ENCODE measurements at regions of chrX and their contacts with region 1.

Region 1: GRCh38 chrX:131802835-131803626 is 220.1 kb upstream of the STK26 start:
- DNase-seq: peak; percentile 20
- ATAC-seq: no peak
- H3K4me3 ChIP-seq: peak overlapping the region in 3 of 5 experiments; percentile 59 to 66 (median 65)
- H3K4me3 Mint-ChIP-seq: no peak overlapping the region
- H3K27ac ChIP-seq: peak overlapping the region in 1 of 2 donors; percentile 15
- H3K27ac Mint-ChIP-seq: no peak overlapping the region
- H3K4me1 ChIP-seq: peaks cover 0 to 6% of the 10 kb centered on the region in 2 donors
- H3K4me1 Mint-ChIP-seq: no peaks in the 10 kb centered on the region
- H3K27me3 ChIP-seq: no peaks in the 10 kb centered on the region
- H3K27me3 Mint-ChIP-seq: no peaks in the 10 kb centered on the region
- CTCF ChIP-seq: no peak

Region 2: DNA sequence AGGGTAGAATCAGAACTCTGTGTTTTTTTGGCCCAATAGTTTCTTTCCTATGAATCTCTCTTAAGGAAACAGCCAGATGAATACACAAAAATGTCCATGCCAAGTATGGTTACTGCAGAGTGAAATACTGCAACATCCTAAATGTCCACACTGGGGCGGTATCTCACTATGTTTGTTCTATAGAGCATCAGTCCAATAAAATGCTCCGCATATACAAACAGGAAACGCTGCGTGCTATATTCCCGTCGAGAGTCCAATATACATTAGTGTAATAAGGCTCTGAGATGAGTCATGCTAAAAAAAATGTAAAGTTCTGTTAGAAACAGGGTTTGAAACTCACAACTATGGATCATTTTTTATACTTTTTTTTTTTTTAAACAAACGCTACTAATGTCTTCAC is 827.1 kb before region 1 on chrX:
- CTCF ChIA-PET with region 1: no interaction called
- POLR2A ChIA-PET with region 1: no interaction called
- intact Hi-C with region 1: loop called (anchors 5 kb)
- DNase-seq: peak; percentile 6
- ATAC-seq: no peak
- H3K4me3 ChIP-seq: no peak overlapping the region
- H3K4me3 Mint-ChIP-seq: no peak overlapping the region
- H3K27ac ChIP-seq: no peak overlapping the region
- H3K27ac Mint-ChIP-seq: no peak overlapping the region
- H3K4me1 ChIP-seq: no peaks in the 10 kb centered on the region
- H3K4me1 Mint-ChIP-seq: no peaks in the 10 kb centered on the region
- H3K27me3 ChIP-seq: no peaks in the 10 kb centered on the region
- H3K27me3 Mint-ChIP-seq: peaks cover 3% of the 10 kb centered on the region
- CTCF ChIP-seq: peak; percentile 53

Region 3: GRCh38 chrX:131987252-131987651 is 184.2 kb after region 1 on chrX:
- CTCF ChIA-PET with region 1: no interaction called
- POLR2A ChIA-PET with region 1: no interaction called
- intact Hi-C with region 1: no loop called
- DNase-seq: peak; percentile 74
- ATAC-seq: peak; percentile 93
- H3K4me3 ChIP-seq: peak overlapping the region in 3 of 5 experiments; percentile 3 to 30 (median 30)
- H3K4me3 Mint-ChIP-seq: peak overlapping the region; percentile 61
- H3K27ac ChIP-seq: peak overlapping the region; percentile 83 to 87
- H3K27ac Mint-ChIP-seq: peak overlapping the region; percentile 98
- H3K4me1 ChIP-seq: peaks cover 42 to 45% of the 10 kb centered on the region in 2 donors
- H3K4me1 Mint-ChIP-seq: peaks cover 53% of the 10 kb centered on the region
- H3K27me3 ChIP-seq: no peaks in the 10 kb centered on the region
- H3K27me3 Mint-ChIP-seq: no peaks in the 10 kb centered on the region
- CTCF ChIP-seq: no peak